AG04449 (cell line): ENCODE measurements at regions of chr17 and their contacts with region 1.

Region 1: DNA sequence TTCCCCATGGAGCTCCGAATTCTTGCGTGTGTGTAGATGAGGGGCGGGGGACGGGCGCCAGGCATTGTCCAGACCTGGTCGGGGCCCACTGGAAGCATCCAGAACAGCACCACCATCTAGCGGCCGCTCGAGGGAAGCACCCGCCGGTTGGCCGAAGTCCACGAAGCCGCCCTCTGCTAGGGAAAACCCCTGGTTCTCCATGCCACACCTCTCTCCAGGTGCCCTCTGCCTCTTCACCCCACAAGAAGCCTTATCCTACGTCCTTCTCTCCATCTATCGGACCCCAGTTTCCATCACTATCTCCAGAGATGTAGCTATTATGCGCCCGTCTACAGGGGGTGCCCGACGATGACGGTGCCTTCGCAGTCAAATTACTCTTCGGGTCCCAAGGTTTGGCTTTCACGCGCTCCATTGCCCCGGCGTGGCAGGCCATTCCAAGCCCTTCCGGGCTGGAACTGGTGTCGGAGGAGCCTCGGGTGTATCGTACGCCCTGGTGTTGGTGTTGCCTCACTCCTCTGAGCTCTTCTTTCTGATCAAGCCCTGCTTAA is 617 bp upstream of the SENP3 start:
- DNase-seq: peak; percentile 23
- H3K4me3 ChIP-seq: peak overlapping the region; percentile 84
- CTCF ChIP-seq: peak; percentile 92

Region 2: DNA sequence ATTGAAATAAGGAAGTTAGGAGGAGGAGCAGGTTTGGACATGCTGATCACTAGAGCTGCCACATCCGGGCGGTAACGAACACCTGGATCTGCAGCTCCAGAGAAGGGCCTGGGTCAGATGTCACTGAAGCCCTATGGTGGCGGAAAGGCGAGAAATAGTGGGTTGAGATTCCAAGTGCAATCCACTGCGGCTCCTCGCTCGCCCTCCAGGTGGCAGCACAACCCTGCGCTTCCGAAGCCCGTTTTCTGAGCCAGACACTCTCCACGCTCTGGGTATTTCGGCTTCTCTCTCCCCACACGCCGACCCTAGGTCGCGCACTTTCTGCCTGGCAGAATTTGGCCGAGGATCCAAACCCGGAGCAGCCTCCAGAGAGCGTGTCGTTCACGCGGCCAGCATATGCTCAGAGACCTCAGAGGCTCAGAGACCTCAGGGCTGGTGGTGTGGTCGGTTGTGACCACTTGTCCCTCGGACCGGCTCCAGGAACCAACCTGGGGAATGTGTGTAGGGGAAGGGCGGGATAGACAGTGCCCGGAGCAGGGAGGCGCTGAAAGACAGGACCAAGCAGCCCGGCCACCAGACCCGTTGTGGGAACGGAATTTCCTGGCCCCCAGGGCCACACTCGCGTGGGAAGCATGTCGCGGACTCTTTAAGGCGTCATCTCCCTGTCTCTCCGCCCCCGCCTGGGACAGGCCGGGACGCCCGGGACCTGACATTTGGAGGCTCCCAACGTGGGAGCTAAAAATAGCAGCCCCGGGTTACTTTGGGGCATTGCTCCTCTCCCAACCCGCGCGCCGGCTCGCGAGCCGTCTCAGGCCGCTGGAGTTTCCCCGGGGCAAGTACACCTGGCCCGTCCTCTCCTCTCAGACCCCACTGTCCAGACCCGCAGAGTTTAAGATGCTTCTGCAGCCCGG is 280.3 kb before region 1 on chr17:
- CTCF ChIA-PET with region 1: interaction called, 23 read pairs
- POLR2A ChIA-PET with region 1: no interaction called
- DNase-seq: no peak
- H3K4me3 ChIP-seq: peak overlapping the region; percentile 52
- CTCF ChIP-seq: peak; percentile 96

Region 3: DNA sequence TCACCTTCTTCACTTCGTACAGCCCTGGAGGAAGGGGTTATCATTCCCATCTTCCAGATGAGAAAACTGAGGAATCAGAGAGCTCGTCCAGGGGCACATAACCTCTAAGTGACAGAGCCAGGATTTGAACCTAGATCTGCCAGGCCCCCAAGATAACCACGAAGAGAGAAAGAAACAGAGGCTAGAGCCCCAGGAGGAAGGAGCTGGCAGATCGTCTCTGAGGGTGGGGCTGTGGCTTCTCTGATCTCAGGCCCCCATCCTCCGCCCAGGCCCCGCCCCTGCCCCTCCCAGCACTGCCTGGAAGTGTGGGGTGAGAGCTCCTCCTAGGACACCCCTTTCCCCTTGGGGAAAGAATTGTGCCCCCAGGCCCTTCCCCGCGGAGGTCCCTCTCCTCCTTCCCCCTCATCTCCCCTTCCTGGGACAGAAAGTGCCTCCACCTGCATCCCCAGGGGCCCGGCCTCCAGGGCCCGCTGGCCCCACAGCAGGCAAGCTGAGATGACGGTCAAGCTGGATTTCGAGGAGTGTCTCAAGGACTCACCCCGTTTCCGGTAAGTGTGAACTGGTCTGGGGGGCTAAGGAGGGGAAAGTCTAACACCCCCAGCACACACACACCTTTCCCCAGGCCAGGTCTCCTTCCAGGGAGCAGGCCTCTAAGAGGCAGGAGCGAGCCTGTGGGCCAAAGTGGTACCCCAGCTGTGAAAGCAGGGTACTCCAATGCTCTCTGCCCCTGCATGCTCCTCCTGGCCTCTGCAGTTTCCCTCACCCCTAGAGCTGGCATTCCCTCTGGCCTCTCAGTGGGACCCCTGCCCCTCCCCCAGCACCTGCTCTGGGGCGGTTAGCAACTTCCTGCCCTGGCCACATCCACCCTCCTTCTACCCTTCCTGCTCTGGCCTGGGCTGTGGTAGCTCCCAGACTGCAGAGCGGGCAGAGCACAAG is 224.6 kb before region 1 on chr17 and contains the start of gene ACAP1:
- CTCF ChIA-PET with region 1: interaction called, 11 read pairs
- POLR2A ChIA-PET with region 1: no interaction called
- DNase-seq: no peak
- H3K4me3 ChIP-seq: no peak within 1 kb of the TSS
- CTCF ChIP-seq: no peak

Region 4: GRCh38 chr17:7444682-7445618 is 116.2 kb before region 1 on chr17 and contains the start of gene CHRNB1:
- CTCF ChIA-PET with region 1: interaction called, 15 read pairs
- POLR2A ChIA-PET with region 1: no interaction called
- DNase-seq: no peak
- H3K4me3 ChIP-seq: peak within 1 kb of the TSS; percentile 36
- CTCF ChIP-seq: no peak

Region 5: GRCh38 chr17:7515911-7516610 is 45.0 kb before region 1 on chr17:
- CTCF ChIA-PET with region 1: interaction called, 140 read pairs
- POLR2A ChIA-PET with region 1: no interaction called
- DNase-seq: no peak
- H3K4me3 ChIP-seq: no peak overlapping the region
- CTCF ChIP-seq: no peak

Region 6: DNA sequence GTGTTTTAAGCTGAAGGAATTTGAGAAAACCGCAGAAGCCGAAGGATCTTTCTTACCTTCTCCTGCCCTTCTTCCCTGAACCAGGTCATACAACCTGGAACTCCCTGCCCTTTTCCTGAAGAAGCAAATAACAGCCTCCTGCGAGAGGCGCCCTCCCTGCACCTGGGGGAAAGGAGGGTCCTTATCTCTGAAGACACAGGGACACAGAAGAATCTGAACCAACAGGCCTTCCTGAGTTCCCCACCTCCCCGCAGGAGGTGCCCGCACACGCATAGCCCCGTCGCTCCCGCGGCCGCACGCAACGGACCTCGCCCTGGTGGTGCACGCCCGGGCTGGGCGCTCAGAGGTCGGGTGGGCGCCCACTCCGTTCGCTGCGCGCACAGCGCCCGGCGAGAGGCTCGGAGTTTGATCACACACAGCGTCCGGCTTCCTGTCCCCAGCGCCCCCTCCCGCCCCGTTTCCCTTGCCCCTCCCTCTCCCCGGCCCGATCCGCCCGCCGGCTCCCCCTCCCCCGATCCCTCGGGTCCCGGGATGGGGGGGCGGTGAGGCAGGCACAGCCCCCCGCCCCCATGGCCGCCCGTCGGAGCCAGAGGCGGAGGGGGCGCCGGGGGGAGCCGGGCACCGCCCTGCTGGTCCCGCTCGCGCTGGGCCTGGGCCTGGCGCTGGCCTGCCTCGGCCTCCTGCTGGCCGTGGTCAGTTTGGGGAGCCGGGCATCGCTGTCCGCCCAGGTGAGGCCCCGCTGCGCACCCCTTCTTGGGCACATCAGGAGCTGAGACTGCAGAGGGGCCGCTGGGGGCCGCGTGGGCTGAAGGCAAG is 12.3 kb before region 1 on chr17 and contains the start of gene TNFSF12:
- CTCF ChIA-PET with region 1: interaction called, 115 read pairs
- POLR2A ChIA-PET with region 1: interaction called, 3 read pairs
- DNase-seq: no peak
- H3K4me3 ChIP-seq: peak within 1 kb of the TSS; percentile 70
- CTCF ChIP-seq: peak; percentile 44

Region 7: DNA sequence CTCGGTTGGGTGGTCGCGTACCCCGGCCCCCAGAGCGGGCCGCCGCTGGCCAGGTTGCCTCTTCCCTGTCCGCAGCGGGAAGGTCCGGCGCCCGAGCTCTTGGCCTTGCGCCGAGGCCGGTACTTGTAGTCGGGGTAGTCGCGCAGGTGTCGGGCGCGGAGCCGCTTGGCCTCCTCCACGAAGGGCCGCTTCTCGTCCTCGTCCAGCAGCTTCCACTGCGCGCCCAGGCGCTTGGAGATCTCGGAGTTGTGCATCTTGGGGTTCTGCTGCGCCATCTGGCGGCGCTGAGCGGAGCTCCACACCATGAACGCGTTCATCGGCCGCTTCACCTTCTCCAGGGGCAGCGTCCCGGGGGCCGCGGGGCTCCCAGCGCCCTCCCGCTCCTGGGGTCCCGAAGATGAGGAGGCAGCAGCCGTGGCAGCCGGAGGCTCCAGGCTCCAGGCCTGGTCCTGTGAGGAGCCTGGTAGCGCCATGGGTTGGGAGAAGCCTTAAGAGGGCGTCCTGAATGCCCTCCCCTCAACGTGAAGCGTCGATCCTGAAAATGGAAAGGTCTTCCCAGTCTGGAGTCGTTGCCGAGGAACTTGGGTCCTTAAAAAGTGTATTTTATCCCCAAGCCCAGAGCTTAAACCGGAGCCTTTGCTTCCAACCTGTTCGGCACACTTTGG is 28.2 kb after region 1 on chr17:
- CTCF ChIA-PET with region 1: interaction called, 35 read pairs
- POLR2A ChIA-PET with region 1: no interaction called
- DNase-seq: no peak
- H3K4me3 ChIP-seq: peak overlapping the region; percentile 6; the same call in 1 of the 2 replicates
- CTCF ChIP-seq: peak; percentile 89

Region 8: GRCh38 chr17:7732981-7733539 is 172.0 kb after region 1 on chr17:
- CTCF ChIA-PET with region 1: no interaction called
- POLR2A ChIA-PET with region 1: no interaction called
- DNase-seq: no peak
- H3K4me3 ChIP-seq: no peak overlapping the region
- CTCF ChIP-seq: no peak

Region 9: DNA sequence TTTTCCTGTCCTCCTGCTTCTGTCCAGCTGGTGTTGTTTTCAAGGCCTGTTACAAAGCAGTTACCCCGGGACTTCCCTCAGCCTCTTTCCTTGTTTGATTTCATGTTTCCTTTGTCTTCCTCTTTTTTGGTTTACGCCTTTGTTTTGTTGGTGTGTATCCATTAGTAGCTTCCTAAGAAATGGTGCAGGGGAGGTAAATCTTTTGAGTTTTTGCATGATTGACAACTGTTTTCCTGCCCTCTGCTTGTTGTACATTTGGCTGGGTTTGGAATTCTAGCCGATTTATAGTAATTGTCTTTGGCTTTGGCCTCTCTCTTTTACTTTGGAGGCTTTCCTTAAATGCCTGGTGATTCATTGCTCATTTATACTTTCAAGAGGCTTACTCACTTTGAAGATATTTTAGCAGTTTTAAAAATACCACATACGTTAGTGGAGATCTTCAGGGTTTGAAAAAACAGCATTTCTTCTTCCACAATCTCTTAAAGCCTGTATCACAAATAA is 189.3 kb after region 1 on chr17:
- CTCF ChIA-PET with region 1: no interaction called
- POLR2A ChIA-PET with region 1: no interaction called
- DNase-seq: peak; percentile 71
- H3K4me3 ChIP-seq: no peak overlapping the region
- CTCF ChIP-seq: no peak